Natural killer cell (primary cell): ENCODE measurements at regions of chr14 and their contacts with region 1.

Region 1: GRCh38 chr14:22973217-22974032 is 8.9 kb downstream of the AJUBA start:
- DNase-seq: peak; percentile 28 to 75
- ATAC-seq: peak; percentile 61 to 82 (median 72)
- H3K4me3 ChIP-seq: no peak overlapping the region
- H3K4me3 Mint-ChIP-seq: no peak overlapping the region
- H3K27ac ChIP-seq: no peak overlapping the region
- H3K27ac Mint-ChIP-seq: no peak overlapping the region
- H3K4me1 ChIP-seq: no peaks in the 10 kb centered on the region
- H3K4me1 Mint-ChIP-seq: no peaks in the 10 kb centered on the region
- H3K27me3 ChIP-seq: no peaks in the 10 kb centered on the region
- H3K27me3 Mint-ChIP-seq: peaks cover 0 to 11% of the 10 kb centered on the region in 2 donors
- CTCF ChIP-seq: peak; percentile 63

Region 2: DNA sequence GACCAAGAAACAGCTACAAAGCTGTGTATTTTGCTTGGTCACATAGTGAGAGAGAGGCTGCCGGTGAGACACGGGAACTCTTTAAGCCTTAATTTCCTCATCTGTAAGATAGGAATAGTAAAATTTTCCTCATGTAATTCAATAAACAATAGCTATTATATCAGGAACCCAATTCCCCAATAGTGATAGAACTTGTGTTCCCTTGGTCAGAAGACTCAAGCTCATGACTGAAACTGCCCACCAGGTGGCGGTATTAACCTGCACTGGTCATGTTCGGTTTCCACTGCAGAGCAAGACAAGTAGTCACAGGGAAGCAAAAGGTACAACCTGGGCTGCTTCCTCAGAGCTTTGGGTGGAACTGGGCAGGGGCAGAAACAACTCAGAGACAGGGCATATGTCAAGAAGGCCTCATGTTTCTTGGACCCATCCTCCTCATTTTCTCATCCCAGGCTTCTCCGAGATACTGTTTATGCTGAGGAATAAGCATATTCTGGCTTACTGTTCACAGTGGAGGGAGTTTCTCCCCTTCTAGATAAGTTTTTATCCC is 13.2 kb after region 1 on chr14:
- intact Hi-C with region 1: loop called (anchors 1 kb)
- DNase-seq: peak; percentile 78 to 95
- ATAC-seq: peak; percentile 70 to 82 (median 70)
- H3K4me3 ChIP-seq: no peak overlapping the region
- H3K4me3 Mint-ChIP-seq: no peak overlapping the region
- H3K27ac ChIP-seq: no peak overlapping the region
- H3K27ac Mint-ChIP-seq: no peak overlapping the region
- H3K4me1 ChIP-seq: peaks cover 15% of the 10 kb centered on the region
- H3K4me1 Mint-ChIP-seq: no peaks in the 10 kb centered on the region
- H3K27me3 ChIP-seq: peaks cover 7% of the 10 kb centered on the region
- H3K27me3 Mint-ChIP-seq: no peaks in the 10 kb centered on the region
- CTCF ChIP-seq: peak; percentile 83